Esophagus squamous epithelium (tissue), 5 donors: ENCODE measurements at regions of chr2 and their contacts with region 1.

Region 1: GRCh38 chr2:55954306-55955035 is 30.9 kb upstream of the EFEMP1 start:
- DNase-seq: no peak
- H3K4me3 ChIP-seq: no peak overlapping the region
- H3K27ac ChIP-seq: peak overlapping the region in 2 of 4 donors; percentile 19 to 38
- H3K4me1 ChIP-seq: peaks cover 2 to 22% (median 6%) of the 10 kb centered on the region in 3 donors
- H3K27me3 ChIP-seq: no peaks in the 10 kb centered on the region
- CTCF ChIP-seq: no peak
- POLR2A ChIP-seq: no peak

Region 2: GRCh38 chr2:55732854-55733253 is 221.6 kb before region 1 on chr2:
- intact Hi-C with region 1: no loop called
- DNase-seq: no peak
- H3K4me3 ChIP-seq: no peak overlapping the region
- H3K27ac ChIP-seq: peak overlapping the region in 2 of 4 donors; percentile 6 to 23
- H3K4me1 ChIP-seq: peaks cover 0 to 12% (median 0%) of the 10 kb centered on the region in 3 donors
- H3K27me3 ChIP-seq: no peaks in the 10 kb centered on the region
- CTCF ChIP-seq: no peak
- POLR2A ChIP-seq: no peak

Region 3: DNA sequence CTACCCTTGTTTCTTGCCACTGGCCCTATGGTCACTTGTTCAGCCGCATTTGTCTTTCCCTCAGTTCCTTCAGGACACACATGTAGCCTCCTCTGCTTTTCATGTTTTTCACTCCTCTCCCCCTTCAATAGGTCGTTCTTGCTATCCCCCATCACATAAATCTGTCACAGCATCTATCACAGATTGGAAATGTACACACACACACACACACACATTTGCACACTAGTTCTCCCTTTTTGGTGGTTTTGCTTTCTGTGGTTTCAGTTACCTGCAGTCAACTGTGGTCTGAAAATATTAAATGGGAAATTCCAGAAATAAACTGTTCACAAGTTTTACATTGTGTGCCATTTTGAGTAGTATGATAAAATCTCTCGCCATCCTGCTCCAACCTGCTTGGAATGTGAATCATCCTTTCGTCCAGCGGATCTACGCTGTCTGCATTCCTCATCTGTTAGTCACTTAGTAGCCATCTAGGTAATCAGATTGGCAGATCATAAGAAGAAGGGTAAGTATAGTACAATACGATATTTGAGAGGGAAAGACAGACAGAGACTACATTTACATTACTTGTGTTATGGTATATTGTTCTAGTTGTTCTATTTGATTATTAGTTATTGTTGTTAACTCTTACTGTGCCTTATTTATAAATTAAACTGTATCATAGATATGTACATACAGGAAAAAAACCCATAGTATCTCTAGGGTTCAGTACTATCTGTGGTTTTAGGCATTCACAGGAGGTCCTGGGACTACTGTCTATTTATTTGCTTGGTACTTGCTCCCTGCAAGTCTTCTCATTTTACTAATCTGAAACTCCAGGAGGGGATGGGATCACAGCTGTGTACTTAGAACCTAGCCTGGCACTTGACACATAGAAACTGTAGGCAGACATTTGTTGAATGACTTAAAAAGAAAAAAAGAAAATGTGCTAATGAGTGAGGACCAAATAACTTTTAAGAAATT is 174.7 kb before region 1 on chr2:
- intact Hi-C with region 1: loop called (anchors 5 kb)
- DNase-seq: no peak
- H3K4me3 ChIP-seq: no peak overlapping the region
- H3K27ac ChIP-seq: no peak overlapping the region
- H3K4me1 ChIP-seq: peaks cover 0 to 5% (median 0%) of the 10 kb centered on the region in 3 donors
- H3K27me3 ChIP-seq: no peaks in the 10 kb centered on the region
- CTCF ChIP-seq: no peak
- POLR2A ChIP-seq: no peak

Region 4: GRCh38 chr2:55899881-55900280 is 54.6 kb before region 1 on chr2:
- intact Hi-C with region 1: no loop called
- DNase-seq: no peak
- H3K4me3 ChIP-seq: no peak overlapping the region
- H3K27ac ChIP-seq: no peak overlapping the region
- H3K4me1 ChIP-seq: peaks cover 0 to 24% (median 3%) of the 10 kb centered on the region in 3 donors
- H3K27me3 ChIP-seq: no peaks in the 10 kb centered on the region
- CTCF ChIP-seq: no peak
- POLR2A ChIP-seq: no peak